CD8-positive, alpha-beta memory T cell (primary cell): ENCODE measurements at regions of chr19 and their contacts with region 1.

Region 1: DNA sequence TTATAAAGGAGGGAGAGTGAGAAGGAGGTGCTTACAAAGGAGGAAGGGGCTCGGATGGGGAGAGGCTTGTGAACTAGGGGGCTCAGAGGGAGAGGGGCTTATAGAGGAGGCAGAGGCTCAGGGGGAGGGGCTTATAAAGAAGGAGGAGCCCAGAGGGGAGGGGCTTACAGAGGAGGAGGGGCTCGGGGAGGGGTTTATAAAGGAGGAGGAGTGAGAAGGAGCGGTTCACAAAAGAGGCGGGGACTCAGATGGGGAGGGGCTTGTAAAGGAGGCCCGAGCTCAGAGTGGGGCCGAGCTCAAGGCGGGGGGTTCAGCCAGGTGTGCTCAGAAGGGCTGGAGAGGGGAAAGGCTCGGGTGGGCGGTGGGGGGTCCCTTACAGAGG is 500 bp downstream of the SMIM24 start:
- DNase-seq: peak in 3 of 5 donors; percentile 25 to 46 (median 28)
- H3K4me3 ChIP-seq: no peak overlapping the region
- H3K4me3 Mint-ChIP-seq: no peak overlapping the region
- H3K27ac ChIP-seq: no peak overlapping the region
- H3K27ac Mint-ChIP-seq: no peak overlapping the region
- H3K4me1 ChIP-seq: peaks cover 9% of the 10 kb centered on the region
- H3K4me1 Mint-ChIP-seq: peaks cover 10 to 16% (median 12%) of the 10 kb centered on the region in 3 donors
- H3K27me3 ChIP-seq: no peaks in the 10 kb centered on the region
- H3K27me3 Mint-ChIP-seq: peaks cover 0 to 4% of the 10 kb centered on the region in 2 donors

Region 2: DNA sequence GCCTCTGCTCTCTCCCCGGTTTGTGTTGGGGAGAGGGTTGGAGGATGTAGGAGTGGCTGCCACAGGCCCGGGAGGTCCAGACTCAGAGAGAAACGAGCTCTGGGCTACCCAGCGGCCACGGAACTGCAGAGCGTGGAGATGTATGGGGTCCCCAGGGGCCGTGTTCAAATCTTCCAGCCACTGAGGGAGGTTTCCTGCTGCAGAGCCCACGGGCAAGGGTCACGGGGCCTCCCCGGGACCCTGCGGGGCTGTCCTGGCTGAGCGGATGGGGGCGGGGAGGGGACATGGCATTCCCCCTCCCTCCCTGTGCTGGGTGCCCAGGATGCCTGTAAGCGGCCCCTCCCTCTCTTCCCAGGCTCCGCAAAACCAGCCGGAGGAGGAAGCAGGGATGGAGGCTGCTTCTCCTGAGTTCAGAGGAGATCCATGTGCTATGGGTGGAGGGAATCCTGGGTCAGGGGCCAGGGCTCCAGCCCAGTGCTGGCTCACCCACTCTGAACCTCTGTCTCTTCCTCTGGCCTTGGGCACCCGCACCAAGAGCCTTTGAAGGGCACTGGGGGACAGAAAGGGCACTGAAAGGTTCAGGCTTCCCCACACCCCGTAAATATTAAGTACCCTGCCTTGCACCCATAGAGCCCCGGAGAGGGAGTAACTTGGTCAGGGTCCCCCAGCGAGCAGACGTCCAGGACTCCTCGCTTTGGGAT is 22.1 kb before region 1 on chr19:
- CTCF ChIA-PET with region 1: no interaction called
- POLR2A ChIA-PET with region 1: no interaction called
- DNase-seq: no peak
- H3K4me3 ChIP-seq: no peak overlapping the region
- H3K4me3 Mint-ChIP-seq: no peak overlapping the region
- H3K27ac ChIP-seq: no peak overlapping the region
- H3K27ac Mint-ChIP-seq: no peak overlapping the region
- H3K4me1 ChIP-seq: no peaks in the 10 kb centered on the region
- H3K4me1 Mint-ChIP-seq: peaks cover 0 to 3% (median 0%) of the 10 kb centered on the region in 3 donors
- H3K27me3 ChIP-seq: no peaks in the 10 kb centered on the region
- H3K27me3 Mint-ChIP-seq: no peaks in the 10 kb centered on the region

Region 3: DNA sequence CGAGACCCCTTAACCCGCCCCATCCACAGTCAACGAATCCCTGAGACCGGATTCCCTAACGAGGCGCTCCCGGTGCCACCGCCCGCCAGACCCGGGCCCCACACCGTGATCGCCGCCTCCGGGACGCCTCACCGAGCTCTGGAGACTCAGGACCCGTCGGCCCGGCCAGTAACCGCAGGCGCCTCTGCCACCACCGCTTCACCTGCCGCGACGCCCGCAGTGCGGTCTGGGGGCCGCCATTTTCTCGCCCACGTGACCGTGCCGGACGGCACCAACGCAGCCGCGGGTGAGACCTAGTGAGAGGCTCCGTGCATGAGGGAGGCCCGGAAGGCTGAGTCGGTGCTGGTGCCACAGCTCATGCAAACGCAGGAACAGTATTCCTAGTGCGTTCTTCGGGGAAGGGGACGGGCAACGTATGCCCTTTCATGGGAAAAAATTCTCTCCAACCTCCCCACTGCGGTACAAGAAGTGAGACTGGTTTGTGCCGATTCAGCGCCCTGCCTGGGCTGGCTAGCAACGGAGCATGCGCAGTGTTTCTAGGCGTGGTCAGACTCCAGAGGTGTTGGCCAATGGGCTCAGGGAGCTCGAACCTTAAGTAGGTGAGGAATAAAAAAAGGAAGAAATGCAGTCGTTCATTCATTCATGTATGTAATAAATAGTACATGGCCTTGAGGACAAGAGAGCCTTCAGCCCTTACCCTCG is 20.8 kb after region 1 on chr19 and contains the start of gene DOHH:
- CTCF ChIA-PET with region 1: interaction called, 10 read pairs
- POLR2A ChIA-PET with region 1: interaction called, 4 read pairs
- DNase-seq: peak; percentile 89 to 96 (median 93)
- H3K4me3 ChIP-seq: peak within 1 kb of the TSS; percentile 76
- H3K4me3 Mint-ChIP-seq: peak within 1 kb of the TSS; percentile 89 to 96 (median 94)
- H3K27ac ChIP-seq: peak within 1 kb of the TSS; percentile 96
- H3K27ac Mint-ChIP-seq: peak within 1 kb of the TSS; percentile 94 to 99 (median 98)
- H3K4me1 ChIP-seq: peaks cover 24% of the 10 kb centered on the region
- H3K4me1 Mint-ChIP-seq: peaks cover 29 to 42% (median 32%) of the 10 kb centered on the region in 3 donors
- H3K27me3 ChIP-seq: no peaks in the 10 kb centered on the region
- H3K27me3 Mint-ChIP-seq: peaks cover 0 to 7% of the 10 kb centered on the region in 2 donors
- total RNA-seq, gene DOHH: 21.3 to 21.4 TPM